ENCODE measurements at regions of chr19 and their contacts with region 1.

Region 1: GRCh38 chr19:49118565-49119410 is at the start of gene C19orf73:
- DNase-seq: peak; percentile 94 to 98 (median 97)
- H3K4me3 ChIP-seq: peak within 1 kb of the TSS; percentile 73 to 78
- H3K4me3 Mint-ChIP-seq: peak within 1 kb of the TSS; percentile 83 to 93 (median 88)
- H3K27ac ChIP-seq: peak within 1 kb of the TSS; percentile 79
- H3K27ac Mint-ChIP-seq: peak within 1 kb of the TSS; percentile 90 to 96 (median 94)
- H3K4me1 ChIP-seq: peaks cover 31% of the 10 kb centered on the region
- H3K4me1 Mint-ChIP-seq: peaks cover 22 to 42% (median 36%) of the 10 kb centered on the region in 4 donors
- H3K27me3 ChIP-seq: no peaks in the 10 kb centered on the region
- H3K27me3 Mint-ChIP-seq: no peaks in the 10 kb centered on the region
- total RNA-seq, gene C19orf73: 1.7 to 1.9 TPM

Region 2: DNA sequence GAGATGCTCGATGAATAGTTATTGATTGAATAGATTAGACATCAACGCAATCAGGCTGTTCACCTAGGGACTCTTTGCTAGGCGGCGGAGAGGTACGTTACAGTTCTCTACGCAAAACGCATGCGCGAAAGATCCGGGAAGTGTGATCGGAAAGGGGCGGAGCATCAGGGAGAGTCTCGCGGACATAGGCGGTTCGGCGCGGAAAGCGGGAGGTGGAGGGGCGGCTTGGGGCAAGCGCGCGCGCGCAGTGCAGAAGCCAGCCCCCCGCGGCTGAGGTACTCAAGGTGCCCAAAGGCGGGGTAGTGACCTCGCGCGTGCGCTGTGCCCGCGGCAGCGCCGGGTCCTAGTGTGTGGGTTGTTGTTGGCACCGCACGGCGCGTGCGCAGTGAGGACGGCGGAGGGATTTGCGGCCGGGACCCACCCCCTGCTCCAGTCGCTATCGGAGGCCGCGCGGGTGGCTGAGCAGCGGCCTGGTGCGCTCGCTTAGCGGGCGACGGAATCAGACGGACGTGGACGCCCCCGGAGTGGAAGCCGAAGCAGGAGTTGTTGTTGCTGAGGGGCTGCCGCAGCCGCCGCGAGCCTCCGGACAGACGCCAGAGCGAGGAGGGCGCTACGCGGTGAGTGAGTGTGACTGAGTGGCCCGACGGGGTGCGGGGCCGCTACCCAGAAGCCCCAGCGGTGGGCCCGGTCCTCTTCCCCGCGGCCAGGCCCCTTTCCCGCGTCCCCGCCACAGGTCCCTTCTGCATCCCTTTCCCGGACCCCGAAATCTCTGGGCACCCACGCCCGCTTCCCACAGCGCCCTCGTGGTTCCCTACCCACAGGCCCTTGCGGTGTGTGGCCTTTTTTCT is 33.5 kb before region 1 on chr19 and contains the start of gene SNRNP70:
- CTCF ChIA-PET with region 1: interaction called, 3 read pairs
- POLR2A ChIA-PET with region 1: no interaction called
- intact Hi-C with region 1: loop called (anchors 1 kb)
- DNase-seq: peak; percentile 99 to 100 (median 100)
- H3K4me3 ChIP-seq: peak within 1 kb of the TSS; percentile 72 to 95
- H3K4me3 Mint-ChIP-seq: peak within 1 kb of the TSS; percentile 82 to 96 (median 94)
- H3K27ac ChIP-seq: peak within 1 kb of the TSS; percentile 81
- H3K27ac Mint-ChIP-seq: peak within 1 kb of the TSS; percentile 88 to 98 (median 93)
- H3K4me1 ChIP-seq: peaks cover 32% of the 10 kb centered on the region
- H3K4me1 Mint-ChIP-seq: peaks cover 22 to 46% (median 32%) of the 10 kb centered on the region in 4 donors
- H3K27me3 ChIP-seq: no peaks in the 10 kb centered on the region
- H3K27me3 Mint-ChIP-seq: peaks cover 0 to 3% of the 10 kb centered on the region in 2 donors
- total RNA-seq, gene SNRNP70: 675 to 689 TPM

Region 3: GRCh38 chr19:49106648-49107135 is 12.1 kb before region 1 on chr19:
- CTCF ChIA-PET with region 1: interaction called, 20 read pairs
- POLR2A ChIA-PET with region 1: no interaction called
- intact Hi-C with region 1: loop called (anchors 1 kb)
- DNase-seq: peak; percentile 55 to 59 (median 57)
- H3K4me3 ChIP-seq: no peak overlapping the region
- H3K4me3 Mint-ChIP-seq: peak overlapping the region in 1 of 8 donors; percentile 4
- H3K27ac ChIP-seq: no peak overlapping the region
- H3K27ac Mint-ChIP-seq: peak overlapping the region in 3 of 7 donors; percentile 15 to 74 (median 64)
- H3K4me1 ChIP-seq: no peaks in the 10 kb centered on the region
- H3K4me1 Mint-ChIP-seq: peaks cover 0 to 11% (median 3%) of the 10 kb centered on the region in 4 donors
- H3K27me3 ChIP-seq: no peaks in the 10 kb centered on the region
- H3K27me3 Mint-ChIP-seq: no peaks in the 10 kb centered on the region

Region 4: GRCh38 chr19:49180659-49181058 is 61.9 kb after region 1 on chr19:
- CTCF ChIA-PET with region 1: no interaction called
- POLR2A ChIA-PET with region 1: no interaction called
- intact Hi-C with region 1: no loop called
- DNase-seq: no peak
- H3K4me3 ChIP-seq: no peak overlapping the region
- H3K4me3 Mint-ChIP-seq: no peak overlapping the region
- H3K27ac ChIP-seq: no peak overlapping the region
- H3K27ac Mint-ChIP-seq: no peak overlapping the region
- H3K4me1 ChIP-seq: no peaks in the 10 kb centered on the region
- H3K4me1 Mint-ChIP-seq: peaks cover 0 to 7% (median 3%) of the 10 kb centered on the region in 4 donors
- H3K27me3 ChIP-seq: no peaks in the 10 kb centered on the region
- H3K27me3 Mint-ChIP-seq: peaks cover 1 to 5% of the 10 kb centered on the region in 2 donors

Measured in CD4-positive, alpha-beta memory T cell (primary cell).